ENCODE measurements at regions of chr1 and their contacts with region 1.

Region 1: DNA sequence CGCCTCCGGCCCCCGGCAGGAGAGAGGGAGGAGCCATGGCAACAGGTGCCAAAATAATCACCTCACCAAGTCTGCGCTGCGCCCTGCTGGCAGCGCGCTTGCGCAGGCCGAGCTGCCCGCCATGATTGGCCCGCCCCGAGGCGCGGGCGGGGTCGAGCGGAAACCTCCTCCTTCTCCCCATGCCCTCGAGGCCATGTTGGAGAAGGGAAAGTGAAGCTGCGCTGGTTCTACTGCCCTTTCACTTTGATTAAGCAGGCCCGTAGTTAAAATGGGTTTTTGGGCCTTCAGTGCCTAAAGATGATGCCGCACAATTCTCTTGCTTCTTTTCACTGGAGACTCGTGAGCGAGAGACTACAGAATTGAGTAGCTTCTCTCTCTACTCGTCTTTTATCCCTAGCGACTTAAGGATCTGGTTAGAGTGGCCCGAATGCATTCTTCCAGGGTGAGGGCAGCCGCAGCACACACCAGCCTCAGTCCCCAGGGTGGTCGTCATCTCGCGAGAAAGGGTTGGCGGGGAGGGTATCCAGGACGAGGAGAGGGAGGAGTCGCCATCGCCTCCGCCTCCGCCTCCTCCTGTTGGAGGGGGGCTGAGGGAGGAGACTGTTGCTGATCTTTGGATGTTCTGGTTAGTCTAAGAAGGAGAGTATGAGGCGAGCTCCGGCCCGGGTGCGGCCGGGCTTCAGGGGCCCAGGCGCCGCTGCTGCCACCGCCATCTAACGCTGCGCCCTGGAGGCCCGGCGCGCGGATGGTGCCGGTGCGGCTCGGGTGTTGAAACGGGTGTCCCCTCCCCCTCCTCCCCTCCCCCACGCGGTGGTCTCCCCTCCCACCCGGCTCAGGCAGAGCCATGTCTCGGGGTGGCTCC is at the start of gene DCAF6:
- DNase-seq: peak; percentile 90 to 99 (median 98)
- ATAC-seq: peak; percentile 79 to 85 (median 80)
- H3K4me3 ChIP-seq: peak within 1 kb of the TSS; percentile 81 to 83
- H3K4me3 Mint-ChIP-seq: peak within 1 kb of the TSS; percentile 87 to 96 (median 95)
- H3K27ac ChIP-seq: peak within 1 kb of the TSS; percentile 97
- H3K27ac Mint-ChIP-seq: peak within 1 kb of the TSS; percentile 99 to 100
- H3K4me1 ChIP-seq: peaks cover 6 to 25% of the 10 kb centered on the region in 2 experiments
- H3K4me1 Mint-ChIP-seq: peaks cover 36 to 52% (median 48%) of the 10 kb centered on the region in 3 donors
- H3K27me3 ChIP-seq: no peaks in the 10 kb centered on the region
- H3K27me3 Mint-ChIP-seq: no peaks in the 10 kb centered on the region
- total RNA-seq, gene DCAF6: 21.6 to 27.4 (median 26.9) TPM

Region 2: DNA sequence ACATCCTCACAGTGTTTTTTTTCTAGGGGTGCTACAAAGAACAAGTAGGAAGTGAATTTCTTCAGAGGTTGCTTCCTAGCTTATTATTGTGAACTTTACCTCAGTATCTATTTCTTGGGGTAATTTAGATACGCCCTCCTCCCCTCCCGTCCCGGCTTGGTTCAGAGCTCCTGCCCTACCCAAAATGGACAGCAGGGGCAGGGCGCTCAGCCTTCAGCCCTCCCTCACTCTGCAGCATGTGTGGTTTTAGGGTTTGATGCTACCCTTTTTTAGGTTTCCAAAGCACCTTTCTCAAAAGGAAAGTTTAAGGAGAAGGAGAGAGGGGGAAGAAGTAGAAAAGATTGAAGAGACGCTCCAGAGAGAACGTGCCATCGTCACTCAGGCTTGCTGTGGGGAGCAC is 1113.9 kb before region 1 on chr1:
- CTCF ChIA-PET with region 1: no interaction called
- POLR2A ChIA-PET with region 1: interaction called in 1 of 2 experiments, 17 read pairs
- DNase-seq: no peak
- ATAC-seq: no peak
- H3K4me3 ChIP-seq: no peak overlapping the region
- H3K4me3 Mint-ChIP-seq: no peak overlapping the region
- H3K27ac ChIP-seq: no peak overlapping the region
- H3K27ac Mint-ChIP-seq: no peak overlapping the region
- H3K4me1 ChIP-seq: no peaks in the 10 kb centered on the region
- H3K4me1 Mint-ChIP-seq: no peaks in the 10 kb centered on the region
- H3K27me3 ChIP-seq: peaks cover 0 to 10% of the 10 kb centered on the region in 2 experiments
- H3K27me3 Mint-ChIP-seq: peaks cover 3 to 14% of the 10 kb centered on the region in 2 donors

Region 3: DNA sequence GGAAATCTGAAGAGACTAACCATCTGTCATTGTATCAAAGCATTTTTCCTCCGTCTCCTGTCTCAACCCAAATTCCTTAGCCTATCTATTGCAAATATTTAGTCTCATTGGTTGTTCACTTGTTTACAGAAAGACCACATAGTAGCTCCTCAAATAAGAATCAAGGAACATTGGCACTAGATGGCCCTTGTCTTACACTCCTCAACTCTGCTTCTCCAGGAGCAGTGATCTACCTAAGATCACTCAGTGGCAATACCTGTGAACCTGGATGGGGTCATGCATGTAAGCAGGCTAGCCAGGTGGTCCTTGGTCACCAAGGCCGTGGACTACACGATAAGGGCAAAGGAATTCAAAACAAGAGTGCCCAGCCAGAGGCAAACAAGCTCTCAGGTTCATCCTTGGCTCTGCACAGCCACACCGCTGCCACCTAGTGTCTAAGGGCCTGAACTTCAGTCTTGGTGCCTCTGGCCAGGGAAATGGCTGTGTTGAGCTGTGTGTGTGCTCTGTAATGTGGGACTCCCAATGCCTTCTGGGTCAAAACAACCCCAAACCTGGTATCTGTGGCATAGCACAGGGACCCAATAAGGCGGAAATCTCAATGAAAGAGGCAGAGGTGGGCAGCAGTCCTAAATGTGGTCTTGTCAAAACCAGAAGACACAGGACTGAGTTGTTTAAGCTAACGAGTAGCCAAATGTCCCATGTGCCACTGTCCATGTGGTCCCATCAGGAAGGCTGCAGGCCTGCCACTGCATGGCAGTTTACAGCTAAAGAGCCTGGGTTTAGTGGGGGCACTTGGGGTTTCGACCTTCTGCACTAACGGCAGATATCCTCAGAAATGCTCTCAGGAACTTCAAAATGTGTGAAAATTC is 145.9 kb after region 1 on chr1:
- CTCF ChIA-PET with region 1: interaction called, 4 to 10 read pairs
- POLR2A ChIA-PET with region 1: no interaction called
- DNase-seq: peak; percentile 8 to 72 (median 47)
- ATAC-seq: peak; percentile 82 to 89 (median 88)
- H3K4me3 ChIP-seq: no peak overlapping the region
- H3K4me3 Mint-ChIP-seq: no peak overlapping the region
- H3K27ac ChIP-seq: no peak overlapping the region
- H3K27ac Mint-ChIP-seq: peak overlapping the region in 1 of 2 donors; percentile 53
- H3K4me1 ChIP-seq: peaks cover 0 to 6% of the 10 kb centered on the region in 2 experiments
- H3K4me1 Mint-ChIP-seq: peaks cover 2 to 5% (median 2%) of the 10 kb centered on the region in 3 donors
- H3K27me3 ChIP-seq: peaks cover 0 to 5% of the 10 kb centered on the region in 2 experiments
- H3K27me3 Mint-ChIP-seq: no peaks in the 10 kb centered on the region

Region 4: DNA sequence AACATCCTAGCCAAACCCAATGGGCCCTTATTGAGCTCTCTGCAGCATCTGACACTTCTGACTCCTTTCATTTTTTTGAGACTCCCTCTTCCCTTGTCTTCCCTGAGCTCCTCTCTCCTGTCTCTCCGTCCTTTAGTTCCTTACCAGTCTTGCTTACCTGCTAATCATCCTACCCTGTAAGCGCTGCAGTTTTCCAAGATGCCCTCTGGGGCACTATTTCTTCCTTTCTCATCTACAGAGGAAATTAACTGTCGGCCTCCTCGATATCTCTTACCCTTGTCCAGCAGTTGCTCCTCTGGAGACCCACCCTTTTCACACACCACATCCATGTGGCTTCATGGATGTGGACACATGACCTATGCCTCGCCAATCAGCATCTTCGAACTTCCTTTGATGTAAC is 193.6 kb after region 1 on chr1:
- CTCF ChIA-PET with region 1: no interaction called
- POLR2A ChIA-PET with region 1: no interaction called
- DNase-seq: no peak
- ATAC-seq: no peak
- H3K4me3 ChIP-seq: no peak overlapping the region
- H3K4me3 Mint-ChIP-seq: no peak overlapping the region
- H3K27ac ChIP-seq: no peak overlapping the region
- H3K27ac Mint-ChIP-seq: no peak overlapping the region
- H3K4me1 ChIP-seq: no peaks in the 10 kb centered on the region
- H3K4me1 Mint-ChIP-seq: peaks cover under 1 to 2% (median 2%) of the 10 kb centered on the region in 3 donors
- H3K27me3 ChIP-seq: peaks cover 8 to 13% of the 10 kb centered on the region in 2 experiments
- H3K27me3 Mint-ChIP-seq: peaks cover 41 to 68% of the 10 kb centered on the region in 2 donors